Breast epithelium (tissue), 4 donors: ENCODE measurements at regions of chr10 and their contacts with region 1.

Region 1: GRCh38 chr10:77165445-77166208 is 472.0 kb downstream of the KCNMA1 start:
- DNase-seq: peak in 1 of 2 donors; percentile 32
- H3K4me3 ChIP-seq: peak overlapping the region in 2 of 3 donors; percentile 11 to 13
- H3K27ac ChIP-seq: peak overlapping the region in 1 of 2 donors; percentile 41
- H3K4me1 ChIP-seq: no peaks in the 10 kb centered on the region
- H3K27me3 ChIP-seq: no peaks in the 10 kb centered on the region
- CTCF ChIP-seq: peak; percentile 49 to 78 (median 70)
- POLR2A ChIP-seq: no peak

Region 2: GRCh38 chr10:77195101-77195500 is 29.5 kb after region 1 on chr10:
- intact Hi-C with region 1: no loop called
- DNase-seq: peak in 1 of 2 donors; percentile 83
- H3K4me3 ChIP-seq: no peak overlapping the region
- H3K27ac ChIP-seq: peak overlapping the region; percentile 65 to 70
- H3K4me1 ChIP-seq: no peaks in the 10 kb centered on the region
- H3K27me3 ChIP-seq: no peaks in the 10 kb centered on the region
- CTCF ChIP-seq: no peak
- POLR2A ChIP-seq: no peak

Region 3: GRCh38 chr10:77207828-77208185 is 42.2 kb after region 1 on chr10:
- intact Hi-C with region 1: no loop called
- DNase-seq: no peak
- H3K4me3 ChIP-seq: no peak overlapping the region
- H3K27ac ChIP-seq: no peak overlapping the region
- H3K4me1 ChIP-seq: no peaks in the 10 kb centered on the region
- H3K27me3 ChIP-seq: no peaks in the 10 kb centered on the region
- CTCF ChIP-seq: no peak
- POLR2A ChIP-seq: no peak

Region 4: GRCh38 chr10:77240041-77240652 is 74.5 kb after region 1 on chr10:
- intact Hi-C with region 1: loop called (anchors 5 kb)
- DNase-seq: no peak
- H3K4me3 ChIP-seq: no peak overlapping the region
- H3K27ac ChIP-seq: no peak overlapping the region
- H3K4me1 ChIP-seq: no peaks in the 10 kb centered on the region
- H3K27me3 ChIP-seq: no peaks in the 10 kb centered on the region
- CTCF ChIP-seq: no peak
- POLR2A ChIP-seq: no peak

Region 5: GRCh38 chr10:77582710-77583115 is 417.1 kb after region 1 on chr10:
- intact Hi-C with region 1: no loop called
- DNase-seq: no peak
- H3K4me3 ChIP-seq: no peak overlapping the region
- H3K27ac ChIP-seq: no peak overlapping the region
- H3K4me1 ChIP-seq: no peaks in the 10 kb centered on the region
- H3K27me3 ChIP-seq: no peaks in the 10 kb centered on the region
- CTCF ChIP-seq: no peak
- POLR2A ChIP-seq: no peak

Region 6: DNA sequence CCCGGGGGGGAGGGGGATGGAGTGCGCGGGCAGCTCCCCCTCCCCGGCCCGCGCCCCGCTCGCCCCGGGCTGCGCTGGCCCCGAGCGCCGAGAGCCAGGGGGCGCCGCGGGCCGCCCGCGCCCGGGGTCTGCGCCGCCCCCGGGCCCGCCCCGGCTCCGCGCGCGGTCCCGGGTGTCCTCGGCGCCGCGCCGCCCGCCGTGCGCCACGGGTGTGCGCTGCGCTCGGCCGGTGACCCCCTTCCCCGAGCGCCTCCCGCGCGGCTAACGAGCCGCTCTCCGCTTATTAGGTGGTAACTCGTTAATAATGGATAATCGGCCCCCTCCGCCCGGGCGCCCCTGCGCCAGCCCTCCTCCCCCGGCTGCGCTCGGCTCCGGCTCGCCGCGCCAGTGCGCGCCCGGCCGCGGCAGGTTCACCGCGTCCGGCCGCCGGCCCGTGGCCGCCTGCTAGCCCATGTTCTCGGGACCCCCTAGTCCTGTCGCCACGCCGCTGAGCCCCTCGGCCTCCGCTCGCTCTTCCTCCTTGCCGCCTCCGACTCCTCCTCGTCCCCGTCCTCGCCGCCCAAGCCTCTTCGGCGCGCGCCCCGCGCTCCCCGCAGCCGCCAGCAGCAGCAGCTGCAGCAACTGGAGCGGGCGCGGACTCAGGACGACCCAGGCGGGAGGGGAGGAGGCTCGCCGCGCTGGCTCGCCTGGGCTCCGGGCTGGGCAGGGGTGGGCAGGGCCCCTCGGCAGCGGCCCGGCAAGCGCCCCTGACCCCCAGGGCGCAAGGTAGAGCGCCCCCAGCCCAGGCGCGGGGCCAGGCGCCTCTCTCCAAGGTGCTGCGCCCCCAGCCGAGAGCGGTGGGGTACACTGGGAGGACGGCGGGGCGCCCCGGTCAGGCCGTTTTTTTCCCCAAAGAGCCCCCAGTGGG is 472.5 kb after region 1 on chr10:
- intact Hi-C with region 1: loop called (anchors 10 kb)
- DNase-seq: no peak
- H3K4me3 ChIP-seq: peak overlapping the region; percentile 54 to 76 (median 62)
- H3K27ac ChIP-seq: no peak overlapping the region
- H3K4me1 ChIP-seq: no peaks in the 10 kb centered on the region
- H3K27me3 ChIP-seq: peaks cover 2 to 38% of the 10 kb centered on the region in 2 donors
- CTCF ChIP-seq: no peak
- POLR2A ChIP-seq: no peak

Region 7: GRCh38 chr10:77959384-77959783 is 793.8 kb after region 1 on chr10:
- intact Hi-C with region 1: no loop called
- DNase-seq: no peak
- H3K4me3 ChIP-seq: peak overlapping the region in 1 of 3 donors; percentile 15
- H3K27ac ChIP-seq: peak overlapping the region; percentile 84 to 88
- H3K4me1 ChIP-seq: no peaks in the 10 kb centered on the region
- H3K27me3 ChIP-seq: no peaks in the 10 kb centered on the region
- CTCF ChIP-seq: no peak
- POLR2A ChIP-seq: no peak